Left lung (tissue), 14 donors: ENCODE measurements at regions of chr17 and their contacts with region 1.

Region 1: DNA sequence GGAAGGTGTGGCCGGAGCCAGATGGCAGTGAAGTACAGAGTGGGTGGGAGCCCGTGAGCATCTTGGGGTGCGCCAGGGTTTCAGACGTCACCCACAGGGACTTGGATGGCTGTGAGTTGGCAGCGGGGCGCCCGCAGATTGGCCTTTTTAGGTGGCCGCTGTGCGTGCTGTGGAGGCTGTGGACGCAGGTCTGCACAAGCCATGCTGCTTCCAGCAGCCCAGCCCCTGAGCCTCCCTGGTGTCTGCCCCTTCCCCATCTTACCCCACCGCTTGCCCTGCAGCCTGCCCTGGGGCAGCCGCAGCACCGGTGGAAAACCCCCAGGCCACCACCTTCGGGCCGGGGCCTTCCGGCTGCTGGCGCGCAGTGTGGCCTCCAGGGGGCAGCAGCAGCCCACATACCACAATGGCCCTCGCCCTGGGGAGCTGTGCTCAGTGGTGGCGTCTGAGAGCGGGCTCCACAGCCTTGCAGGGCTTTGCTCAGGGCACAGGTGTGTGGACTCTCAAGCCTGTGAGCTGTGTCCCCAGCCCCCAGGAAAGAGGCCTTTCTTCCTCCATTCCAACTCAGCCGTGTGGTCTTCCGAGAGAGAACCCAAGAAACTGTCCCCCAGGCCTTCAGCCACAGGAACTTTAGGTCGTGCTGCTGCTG is 11.8 kb downstream of the ENDOV start:
- DNase-seq: peak; percentile 43 to 96 (median 70)
- ATAC-seq: peak; percentile 96
- H3K4me3 ChIP-seq: no peak overlapping the region
- H3K27ac ChIP-seq: no peak overlapping the region
- H3K4me1 ChIP-seq: peaks cover 0 to 12% of the 10 kb centered on the region in 2 donors
- H3K27me3 ChIP-seq: no peaks in the 10 kb centered on the region
- CTCF ChIP-seq: peak; percentile 93 to 99

Region 2: GRCh38 chr17:80468242-80468641 is 41.4 kb after region 1 on chr17:
- intact Hi-C with region 1: no loop called
- DNase-seq: no peak
- ATAC-seq: no peak
- H3K4me3 ChIP-seq: no peak overlapping the region
- H3K27ac ChIP-seq: no peak overlapping the region
- H3K4me1 ChIP-seq: no peaks in the 10 kb centered on the region
- H3K27me3 ChIP-seq: peaks cover 12 to 90% of the 10 kb centered on the region in 2 donors
- CTCF ChIP-seq: no peak

Region 3: DNA sequence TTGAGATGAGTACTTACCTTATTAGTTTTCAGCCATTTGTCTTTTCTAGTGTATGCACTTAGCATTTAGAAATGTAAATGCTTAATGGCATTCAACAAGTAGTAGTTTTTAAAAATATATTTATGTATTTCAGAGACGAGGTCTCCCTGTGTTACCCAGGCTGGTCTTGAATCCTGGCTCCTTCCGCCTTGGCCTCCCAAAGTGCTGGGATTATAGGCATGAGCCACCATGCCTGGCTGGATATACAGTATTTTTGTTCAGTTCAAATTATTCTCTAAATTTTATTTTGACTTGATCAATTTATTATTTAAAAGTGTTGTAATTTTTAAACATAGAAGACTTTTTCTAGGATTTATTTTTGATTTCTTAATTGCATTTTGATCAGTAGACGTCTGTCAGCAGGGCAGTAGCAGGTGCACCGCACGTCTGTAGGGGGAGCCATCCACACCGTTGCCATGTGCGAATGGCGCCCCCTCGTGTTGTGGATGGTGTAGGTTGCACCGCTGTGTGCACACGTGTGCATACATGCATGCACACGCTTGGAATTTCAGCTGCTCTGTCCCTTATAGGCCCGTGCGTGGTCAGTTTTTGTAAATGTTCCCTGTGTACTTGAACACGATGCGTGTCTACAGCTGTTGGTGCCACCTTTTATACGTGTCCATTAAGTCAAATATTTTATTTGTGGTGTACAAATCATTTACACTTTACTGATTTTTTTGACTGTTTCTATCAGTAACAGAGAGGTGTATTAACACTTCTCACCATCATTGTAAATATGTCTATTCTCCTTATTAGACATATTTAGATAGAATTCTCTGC is 148.5 kb after region 1 on chr17:
- intact Hi-C with region 1: loop called in 1 of 2 experiments (anchors 10 kb)
- DNase-seq: peak; percentile 39 to 94 (median 83)
- ATAC-seq: peak; percentile 100
- H3K4me3 ChIP-seq: no peak overlapping the region
- H3K27ac ChIP-seq: no peak overlapping the region
- H3K4me1 ChIP-seq: peaks cover 0 to 5% of the 10 kb centered on the region in 2 donors
- H3K27me3 ChIP-seq: no peaks in the 10 kb centered on the region
- CTCF ChIP-seq: peak; percentile 97 to 99

Region 4: DNA sequence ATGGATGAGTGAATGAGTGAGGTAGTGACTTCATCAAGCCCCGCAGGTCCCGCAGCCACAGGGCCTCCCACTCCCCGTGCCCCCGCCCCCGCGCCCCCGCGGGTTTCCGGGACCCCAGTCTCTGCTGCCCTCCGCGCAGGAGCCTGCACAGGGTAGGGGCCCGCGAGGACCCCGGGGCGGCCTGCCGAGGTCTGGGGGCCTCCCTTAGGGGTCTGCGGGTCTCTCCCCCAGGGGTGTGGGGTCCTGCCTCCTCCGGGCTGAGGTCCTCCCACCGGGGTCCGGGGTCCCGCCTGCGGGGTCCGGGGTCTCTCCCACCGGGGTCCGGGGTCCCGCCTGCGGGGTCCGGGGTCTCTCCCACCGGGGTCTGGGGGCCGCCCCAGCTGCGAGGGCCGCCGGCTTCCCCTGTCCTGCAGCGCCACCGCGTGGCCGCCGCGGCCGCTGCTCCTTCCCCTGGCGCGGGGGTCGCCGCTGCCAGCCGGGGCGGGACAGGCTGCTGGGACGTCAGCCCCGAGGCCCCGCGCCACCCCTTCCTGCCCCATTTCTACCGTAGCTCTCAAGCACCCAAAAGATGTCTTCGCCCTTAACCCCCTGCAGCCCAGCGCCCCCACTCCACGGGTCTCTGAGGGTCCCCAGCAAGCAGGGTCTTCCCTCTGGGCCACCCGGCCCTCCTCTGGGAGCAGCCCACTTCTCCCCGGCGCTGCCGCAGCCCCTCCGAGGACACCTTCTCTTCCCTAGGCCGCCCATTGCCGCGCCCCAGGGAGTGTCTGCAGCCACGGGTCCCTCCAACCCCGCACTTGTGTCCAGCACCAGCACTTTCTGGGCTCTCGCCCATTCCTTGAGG is 554.5 kb after region 1 on chr17:
- intact Hi-C with region 1: loop called in 1 of 2 experiments (anchors 5 kb)
- DNase-seq: peak in 1 of 4 donors; percentile 81
- ATAC-seq: peak; percentile 36
- H3K4me3 ChIP-seq: no peak overlapping the region
- H3K27ac ChIP-seq: no peak overlapping the region
- H3K4me1 ChIP-seq: peaks cover 5 to 8% of the 10 kb centered on the region in 2 donors
- H3K27me3 ChIP-seq: peaks cover 0 to 24% of the 10 kb centered on the region in 2 donors
- CTCF ChIP-seq: peak; percentile 78 to 85